ENCODE measurements at regions of chr14 and their contacts with region 1.

Region 1: GRCh38 chr14:80996049-80996901 is 40.9 kb downstream of the TSHR start:
- DNase-seq: peak in 3 of 9 experiments; percentile 26 to 61 (median 51)
- ATAC-seq: peak; percentile 54
- H3K4me3 ChIP-seq: no peak overlapping the region
- H3K4me3 Mint-ChIP-seq: no peak overlapping the region
- H3K27ac ChIP-seq: no peak overlapping the region
- H3K27ac Mint-ChIP-seq: no peak overlapping the region
- H3K4me1 ChIP-seq: no peaks in the 10 kb centered on the region
- H3K4me1 Mint-ChIP-seq: no peaks in the 10 kb centered on the region
- H3K27me3 ChIP-seq: no peaks in the 10 kb centered on the region
- H3K27me3 Mint-ChIP-seq: peaks cover 9% of the 10 kb centered on the region
- CTCF ChIP-seq: peak; percentile 59

Region 2: DNA sequence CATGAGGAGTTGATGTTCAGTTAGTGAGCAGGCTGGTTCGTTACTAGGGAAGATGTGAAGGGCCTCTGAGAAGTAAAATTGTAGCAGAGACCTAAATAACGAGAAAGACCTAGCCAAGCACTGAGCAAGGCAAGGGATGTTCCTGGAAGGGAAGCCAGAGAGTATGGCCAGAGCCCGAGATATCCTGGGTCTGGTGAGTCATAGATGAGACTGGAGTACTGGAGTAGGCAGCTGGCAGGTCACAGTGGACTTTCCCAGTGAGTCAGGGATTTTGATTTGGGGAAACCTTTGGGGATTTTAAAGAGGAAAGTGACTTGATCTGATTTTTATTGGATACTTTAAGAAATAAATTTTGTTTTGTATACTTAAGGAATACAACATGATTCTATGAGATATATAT is 1154.0 kb before region 1 on chr14:
- CTCF ChIA-PET with region 1: no interaction called
- POLR2A ChIA-PET with region 1: no interaction called
- intact Hi-C with region 1: no loop called
- DNase-seq: no peak
- ATAC-seq: no peak
- H3K4me3 ChIP-seq: no peak overlapping the region
- H3K4me3 Mint-ChIP-seq: no peak overlapping the region
- H3K27ac ChIP-seq: no peak overlapping the region
- H3K27ac Mint-ChIP-seq: no peak overlapping the region
- H3K4me1 ChIP-seq: no peaks in the 10 kb centered on the region
- H3K4me1 Mint-ChIP-seq: no peaks in the 10 kb centered on the region
- H3K27me3 ChIP-seq: no peaks in the 10 kb centered on the region
- H3K27me3 Mint-ChIP-seq: no peaks in the 10 kb centered on the region
- CTCF ChIP-seq: no peak

Region 3: GRCh38 chr14:80560800-80561657 is 435.2 kb before region 1 on chr14:
- CTCF ChIA-PET with region 1: no interaction called
- POLR2A ChIA-PET with region 1: no interaction called
- intact Hi-C with region 1: no loop called
- DNase-seq: no peak
- ATAC-seq: no peak
- H3K4me3 ChIP-seq: no peak overlapping the region
- H3K4me3 Mint-ChIP-seq: no peak overlapping the region
- H3K27ac ChIP-seq: no peak overlapping the region
- H3K27ac Mint-ChIP-seq: no peak overlapping the region
- H3K4me1 ChIP-seq: no peaks in the 10 kb centered on the region
- H3K4me1 Mint-ChIP-seq: no peaks in the 10 kb centered on the region
- H3K27me3 ChIP-seq: no peaks in the 10 kb centered on the region
- H3K27me3 Mint-ChIP-seq: no peaks in the 10 kb centered on the region
- CTCF ChIP-seq: no peak

Region 4: DNA sequence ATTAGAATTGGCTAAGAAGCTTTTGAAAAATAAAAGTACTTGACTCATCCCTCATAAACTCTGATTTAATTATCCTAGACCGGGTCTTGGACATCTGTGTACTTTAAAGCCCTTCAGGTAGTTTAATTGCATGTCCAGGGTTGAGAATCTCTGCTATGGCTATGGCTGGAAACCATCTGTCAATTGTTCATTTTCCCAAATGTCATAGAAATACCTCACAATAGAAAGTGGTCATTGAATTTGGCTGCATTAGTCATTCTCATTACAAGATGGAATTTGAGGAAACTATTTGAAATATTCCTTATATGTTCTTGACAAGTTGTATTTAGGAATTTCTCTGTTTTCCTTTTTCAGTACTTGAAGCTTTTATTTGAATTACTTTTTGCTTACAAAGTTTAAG is 70.4 kb after region 1 on chr14:
- CTCF ChIA-PET with region 1: no interaction called
- POLR2A ChIA-PET with region 1: no interaction called
- intact Hi-C with region 1: no loop called
- DNase-seq: no peak
- ATAC-seq: no peak
- H3K4me3 ChIP-seq: no peak overlapping the region
- H3K4me3 Mint-ChIP-seq: no peak overlapping the region
- H3K27ac ChIP-seq: no peak overlapping the region
- H3K27ac Mint-ChIP-seq: no peak overlapping the region
- H3K4me1 ChIP-seq: no peaks in the 10 kb centered on the region
- H3K4me1 Mint-ChIP-seq: no peaks in the 10 kb centered on the region
- H3K27me3 ChIP-seq: no peaks in the 10 kb centered on the region
- H3K27me3 Mint-ChIP-seq: no peaks in the 10 kb centered on the region
- CTCF ChIP-seq: no peak

Region 5: DNA sequence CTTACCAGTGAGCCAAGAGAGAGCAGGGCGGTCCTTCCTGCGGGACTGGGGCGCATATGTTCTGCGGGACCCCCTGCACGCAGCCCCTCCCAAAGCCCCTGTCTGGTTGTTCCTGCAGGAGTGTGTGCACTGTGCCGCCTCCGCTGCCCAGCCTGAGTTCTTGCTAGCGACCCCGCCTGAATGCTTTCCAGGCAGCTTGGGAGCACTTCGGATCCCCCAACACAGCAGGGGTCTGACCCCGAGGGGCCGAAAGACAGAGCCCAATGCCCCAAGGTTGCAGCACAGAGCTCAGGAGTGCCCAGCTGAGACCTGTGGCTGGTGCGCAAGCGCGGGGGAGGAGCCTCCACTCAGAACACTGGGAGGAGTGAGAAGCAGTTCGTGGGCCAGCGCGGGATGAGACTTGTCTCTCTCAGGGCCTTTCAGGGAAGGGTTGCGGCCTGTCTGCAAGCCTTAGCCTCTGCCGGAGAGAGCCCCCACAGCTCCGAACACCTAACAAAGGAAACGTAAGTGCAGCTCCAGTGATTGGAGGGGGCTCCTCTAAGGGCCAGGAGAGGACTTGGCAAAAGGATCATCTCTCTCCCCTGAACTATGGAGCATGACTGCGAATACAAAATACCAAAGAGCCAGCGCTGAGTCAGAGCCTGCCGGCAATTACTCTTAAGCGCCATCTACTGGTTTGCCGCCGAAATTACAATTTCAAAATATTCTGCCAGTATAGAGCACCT is 174.0 kb after region 1 on chr14:
- CTCF ChIA-PET with region 1: interaction called, 10 read pairs
- POLR2A ChIA-PET with region 1: no interaction called
- intact Hi-C with region 1: loop called (anchors 1 to 5 kb)
- DNase-seq: peak; percentile 72 to 92 (median 89)
- ATAC-seq: peak; percentile 97
- H3K4me3 ChIP-seq: peak overlapping the region; percentile 67 to 70
- H3K4me3 Mint-ChIP-seq: peak overlapping the region; percentile 94
- H3K27ac ChIP-seq: peak overlapping the region; percentile 53 to 81
- H3K27ac Mint-ChIP-seq: peak overlapping the region; percentile 97
- H3K4me1 ChIP-seq: peaks cover 12% of the 10 kb centered on the region
- H3K4me1 Mint-ChIP-seq: peaks cover 20% of the 10 kb centered on the region
- H3K27me3 ChIP-seq: no peaks in the 10 kb centered on the region
- H3K27me3 Mint-ChIP-seq: no peaks in the 10 kb centered on the region
- CTCF ChIP-seq: peak; percentile 77

Region 6: GRCh38 chr14:81211844-81212243 is 215.6 kb after region 1 on chr14:
- CTCF ChIA-PET with region 1: interaction called, 4 read pairs
- POLR2A ChIA-PET with region 1: no interaction called
- intact Hi-C with region 1: loop called (anchors 1 to 2 kb)
- DNase-seq: peak in 5 of 9 experiments; percentile 19 to 61 (median 33)
- ATAC-seq: peak; percentile 84
- H3K4me3 ChIP-seq: no peak overlapping the region
- H3K4me3 Mint-ChIP-seq: no peak overlapping the region
- H3K27ac ChIP-seq: no peak overlapping the region
- H3K27ac Mint-ChIP-seq: peak overlapping the region; percentile 16
- H3K4me1 ChIP-seq: peaks cover 13% of the 10 kb centered on the region
- H3K4me1 Mint-ChIP-seq: peaks cover 60% of the 10 kb centered on the region
- H3K27me3 ChIP-seq: no peaks in the 10 kb centered on the region
- H3K27me3 Mint-ChIP-seq: no peaks in the 10 kb centered on the region
- CTCF ChIP-seq: peak; percentile 38

Region 7: DNA sequence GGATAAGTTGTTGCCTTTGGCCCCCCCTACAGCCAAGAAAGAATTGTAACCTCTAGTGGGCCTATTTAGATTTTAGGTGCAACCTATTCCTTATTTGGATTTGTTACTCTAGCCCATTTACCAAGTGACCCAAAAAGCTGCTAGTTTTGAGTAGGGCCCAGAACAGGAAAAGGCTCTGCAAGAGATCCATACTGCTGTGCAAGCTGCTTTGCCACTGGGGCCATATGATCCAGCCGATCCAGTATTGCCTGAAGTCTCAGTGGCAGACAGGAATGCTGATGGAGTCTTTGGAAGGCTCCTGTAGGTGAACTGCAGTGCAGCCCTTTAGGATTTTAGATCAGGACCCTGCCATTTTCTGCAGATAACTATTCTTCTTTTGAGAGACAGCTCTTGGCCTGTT is 237.3 kb after region 1 on chr14:
- CTCF ChIA-PET with region 1: interaction called, 4 read pairs
- POLR2A ChIA-PET with region 1: no interaction called
- intact Hi-C with region 1: loop called in 1 of 2 experiments (anchors 1 kb)
- DNase-seq: peak in 1 of 9 experiments; percentile 12
- ATAC-seq: no peak
- H3K4me3 ChIP-seq: no peak overlapping the region
- H3K4me3 Mint-ChIP-seq: no peak overlapping the region
- H3K27ac ChIP-seq: no peak overlapping the region
- H3K27ac Mint-ChIP-seq: no peak overlapping the region
- H3K4me1 ChIP-seq: no peaks in the 10 kb centered on the region
- H3K4me1 Mint-ChIP-seq: no peaks in the 10 kb centered on the region
- H3K27me3 ChIP-seq: no peaks in the 10 kb centered on the region
- H3K27me3 Mint-ChIP-seq: no peaks in the 10 kb centered on the region
- CTCF ChIP-seq: no peak